ENCODE measurements at regions of chr7 and their contacts with region 1.

Region 1: DNA sequence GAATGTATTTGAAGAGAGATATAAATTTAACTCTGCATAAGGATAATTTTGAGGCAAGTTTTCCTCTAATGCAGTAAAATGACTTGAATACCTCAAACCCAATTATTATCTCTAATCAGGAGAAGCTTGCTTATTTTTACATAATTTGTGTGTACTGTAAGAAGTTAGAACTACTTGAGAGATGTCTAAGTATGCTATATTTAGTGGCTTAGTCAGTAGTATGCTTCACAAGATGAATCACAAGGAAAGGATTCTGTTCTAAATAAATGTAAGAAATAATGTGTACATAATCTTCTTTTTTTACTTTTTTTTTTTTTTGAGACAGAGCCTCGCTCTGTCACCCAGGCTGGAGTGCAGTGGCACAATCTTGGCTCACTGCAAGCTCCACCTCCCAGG is 13.7 kb downstream of the PHTF2 start:
- DNase-seq: no peak
- ATAC-seq: no peak
- H3K4me3 ChIP-seq: no peak overlapping the region
- H3K4me3 Mint-ChIP-seq: peak overlapping the region in 1 of 3 donors; percentile 15
- H3K27ac ChIP-seq: no peak overlapping the region
- H3K27ac Mint-ChIP-seq: no peak overlapping the region
- H3K4me1 ChIP-seq: peaks cover 0 to 2% of the 10 kb centered on the region in 2 experiments
- H3K4me1 Mint-ChIP-seq: peaks cover 41 to 62% (median 44%) of the 10 kb centered on the region in 3 donors
- H3K27me3 ChIP-seq: no peaks in the 10 kb centered on the region
- H3K27me3 Mint-ChIP-seq: no peaks in the 10 kb centered on the region

Region 2: GRCh38 chr7:77839919-77840318 is 27.6 kb after region 1 on chr7:
- CTCF ChIA-PET with region 1: interaction called in 1 of 2 experiments, 10 read pairs
- POLR2A ChIA-PET with region 1: interaction called in 1 of 2 experiments, 3 read pairs
- DNase-seq: no peak
- ATAC-seq: no peak
- H3K4me3 ChIP-seq: no peak overlapping the region
- H3K4me3 Mint-ChIP-seq: no peak overlapping the region
- H3K27ac ChIP-seq: no peak overlapping the region
- H3K27ac Mint-ChIP-seq: no peak overlapping the region
- H3K4me1 ChIP-seq: no peaks in the 10 kb centered on the region
- H3K4me1 Mint-ChIP-seq: peaks cover 9 to 33% (median 22%) of the 10 kb centered on the region in 3 donors
- H3K27me3 ChIP-seq: no peaks in the 10 kb centered on the region
- H3K27me3 Mint-ChIP-seq: no peaks in the 10 kb centered on the region

Region 3: GRCh38 chr7:77855371-77856083 is 43.2 kb after region 1 on chr7:
- CTCF ChIA-PET with region 1: no interaction called
- POLR2A ChIA-PET with region 1: no interaction called
- DNase-seq: no peak
- ATAC-seq: no peak
- H3K4me3 ChIP-seq: no peak overlapping the region
- H3K4me3 Mint-ChIP-seq: no peak overlapping the region
- H3K27ac ChIP-seq: no peak overlapping the region
- H3K27ac Mint-ChIP-seq: no peak overlapping the region
- H3K4me1 ChIP-seq: peaks cover 0 to 5% of the 10 kb centered on the region in 2 experiments
- H3K4me1 Mint-ChIP-seq: peaks cover 50 to 66% (median 54%) of the 10 kb centered on the region in 3 donors
- H3K27me3 ChIP-seq: no peaks in the 10 kb centered on the region
- H3K27me3 Mint-ChIP-seq: no peaks in the 10 kb centered on the region

Region 4: GRCh38 chr7:77894574-77895091 is 82.3 kb after region 1 on chr7:
- CTCF ChIA-PET with region 1: no interaction called
- POLR2A ChIA-PET with region 1: no interaction called
- DNase-seq: no peak
- ATAC-seq: no peak
- H3K4me3 ChIP-seq: no peak overlapping the region
- H3K4me3 Mint-ChIP-seq: no peak overlapping the region
- H3K27ac ChIP-seq: no peak overlapping the region
- H3K27ac Mint-ChIP-seq: no peak overlapping the region
- H3K4me1 ChIP-seq: no peaks in the 10 kb centered on the region
- H3K4me1 Mint-ChIP-seq: peaks cover 0 to 17% (median 5%) of the 10 kb centered on the region in 3 donors
- H3K27me3 ChIP-seq: no peaks in the 10 kb centered on the region
- H3K27me3 Mint-ChIP-seq: no peaks in the 10 kb centered on the region